ENCODE measurements at regions of chr3 and their contacts with region 1.

Region 1: GRCh38 chr3:96970198-96970597 is 155.8 kb downstream of the EPHA6 start:
- DNase-seq: no peak
- ATAC-seq: no peak
- H3K4me3 ChIP-seq: no peak overlapping the region
- H3K4me3 Mint-ChIP-seq: no peak overlapping the region
- H3K27ac ChIP-seq: no peak overlapping the region
- H3K27ac Mint-ChIP-seq: no peak overlapping the region
- H3K4me1 ChIP-seq: no peaks in the 10 kb centered on the region
- H3K4me1 Mint-ChIP-seq: no peaks in the 10 kb centered on the region
- H3K27me3 ChIP-seq: no peaks in the 10 kb centered on the region
- H3K27me3 Mint-ChIP-seq: no peaks in the 10 kb centered on the region
- CTCF ChIP-seq: no peak

Region 2: DNA sequence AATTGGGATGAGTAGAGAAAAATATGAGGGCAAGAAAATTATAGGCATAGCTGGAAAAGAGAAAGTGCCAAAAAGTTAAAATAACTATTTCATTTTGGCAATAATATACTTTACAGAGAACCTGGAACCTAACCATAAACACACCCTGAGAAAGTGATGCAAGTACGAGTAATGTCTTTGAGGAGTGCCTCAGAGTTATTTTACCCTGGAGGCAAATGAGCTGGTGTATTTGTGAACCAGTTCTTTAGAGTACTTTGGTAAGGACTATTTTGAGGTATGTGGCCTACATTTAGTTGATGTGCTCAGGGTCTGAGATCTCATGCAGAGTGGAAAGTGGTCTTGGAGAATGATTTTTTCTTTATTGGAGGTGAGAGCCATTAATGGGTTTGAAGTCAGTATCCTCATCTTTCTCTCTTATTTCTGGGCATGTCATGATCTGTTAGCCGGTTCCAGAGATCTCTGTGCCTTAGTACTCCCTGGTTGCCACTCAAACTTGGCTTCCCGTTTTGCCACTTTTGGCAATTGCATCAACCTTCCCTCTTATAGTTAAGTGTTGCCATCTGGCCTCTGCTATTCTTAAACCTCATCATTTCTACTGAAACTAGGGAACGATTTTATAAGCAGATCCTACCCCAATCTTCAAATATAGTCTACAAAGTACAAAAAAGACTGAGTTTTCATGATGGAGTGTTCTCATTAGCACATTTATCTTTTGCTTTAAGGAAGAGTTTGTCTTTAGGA is 10.1 kb before region 1 on chr3:
- CTCF ChIA-PET with region 1: no interaction called
- POLR2A ChIA-PET with region 1: no interaction called
- intact Hi-C with region 1: loop called in 1 of 2 experiments (anchors 1 kb)
- DNase-seq: no peak
- ATAC-seq: no peak
- H3K4me3 ChIP-seq: no peak overlapping the region
- H3K4me3 Mint-ChIP-seq: no peak overlapping the region
- H3K27ac ChIP-seq: no peak overlapping the region
- H3K27ac Mint-ChIP-seq: no peak overlapping the region
- H3K4me1 ChIP-seq: no peaks in the 10 kb centered on the region
- H3K4me1 Mint-ChIP-seq: no peaks in the 10 kb centered on the region
- H3K27me3 ChIP-seq: no peaks in the 10 kb centered on the region
- H3K27me3 Mint-ChIP-seq: no peaks in the 10 kb centered on the region
- CTCF ChIP-seq: no peak